ENCODE measurements at regions of chr16 and their contacts with region 1.

Region 1: GRCh38 chr16:86761111-86762031 is 183.0 kb downstream of the FOXL1 start:
- DNase-seq: peak; percentile 89
- ATAC-seq: peak; percentile 84
- H3K4me3 Mint-ChIP-seq: no peak overlapping the region
- H3K27ac Mint-ChIP-seq: no peak overlapping the region
- H3K4me1 Mint-ChIP-seq: peaks cover 59% of the 10 kb centered on the region
- H3K27me3 Mint-ChIP-seq: peaks cover 9% of the 10 kb centered on the region; the same call in 1 of the 2 replicates
- CTCF ChIP-seq: peak; percentile 80

Region 2: GRCh38 chr16:86575754-86576557 is 185.4 kb before region 1 on chr16:
- CTCF ChIA-PET with region 1: interaction called, 22 read pairs
- POLR2A ChIA-PET with region 1: no interaction called
- DNase-seq: peak; percentile 92
- ATAC-seq: peak; percentile 74
- H3K4me3 Mint-ChIP-seq: peak overlapping the region; percentile 89
- H3K27ac Mint-ChIP-seq: no peak overlapping the region
- H3K4me1 Mint-ChIP-seq: peaks cover 68% of the 10 kb centered on the region
- H3K27me3 Mint-ChIP-seq: peaks cover 98% of the 10 kb centered on the region
- CTCF ChIP-seq: no peak

Region 3: GRCh38 chr16:86718118-86718517 is 43.3 kb before region 1 on chr16:
- CTCF ChIA-PET with region 1: no interaction called
- POLR2A ChIA-PET with region 1: no interaction called
- DNase-seq: no peak
- ATAC-seq: peak; percentile 39; the same call in 1 of the 2 replicates
- H3K4me3 Mint-ChIP-seq: no peak overlapping the region
- H3K27ac Mint-ChIP-seq: no peak overlapping the region
- H3K4me1 Mint-ChIP-seq: peaks cover 38% of the 10 kb centered on the region
- H3K27me3 Mint-ChIP-seq: no peaks in the 10 kb centered on the region
- CTCF ChIP-seq: no peak

Region 4: DNA sequence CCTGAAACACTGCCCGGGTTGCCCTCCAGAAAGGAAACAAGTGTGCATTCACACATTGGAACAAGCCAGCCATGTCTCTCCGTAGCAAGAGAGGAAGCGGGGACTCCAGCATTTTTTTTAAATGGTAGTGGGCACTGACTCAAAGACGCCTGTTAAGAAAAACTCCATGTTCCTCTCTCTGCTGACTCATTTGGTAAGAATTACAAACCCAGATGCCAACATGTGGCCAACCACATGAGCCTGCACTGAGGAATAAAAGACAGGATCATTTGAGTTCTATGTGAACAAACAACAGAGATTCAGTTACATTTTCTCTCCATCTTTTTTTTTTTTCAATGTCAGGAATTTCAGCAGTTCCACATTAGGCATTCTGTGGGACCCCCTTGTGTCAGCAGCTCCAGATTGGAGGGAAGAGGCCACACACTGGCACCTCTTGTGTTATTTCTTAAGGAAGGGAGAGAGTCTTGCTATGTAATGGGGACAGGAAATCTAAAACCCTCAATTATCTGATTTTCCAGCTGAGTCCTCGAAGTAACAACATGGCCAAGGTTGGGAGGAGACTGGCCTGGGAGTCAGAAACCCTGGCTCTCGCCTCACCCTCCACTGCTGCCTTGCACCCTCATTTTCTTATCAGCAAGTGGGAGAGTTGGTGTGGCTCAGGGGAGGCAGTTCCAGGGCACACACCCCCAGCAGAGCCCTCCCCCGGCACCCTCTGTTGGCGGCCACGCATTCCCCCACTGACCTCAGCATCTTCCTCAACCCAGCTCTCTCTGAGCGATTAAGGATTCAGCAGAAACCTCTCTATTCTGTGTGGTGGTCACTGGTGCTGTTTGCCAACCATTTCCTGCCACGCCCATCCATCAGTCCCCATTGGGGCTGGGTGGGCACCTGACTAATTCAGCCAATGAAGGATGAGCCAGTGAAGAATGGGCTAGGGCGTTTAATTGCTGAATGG is 10.0 kb before region 1 on chr16:
- CTCF ChIA-PET with region 1: interaction called, 11 read pairs
- POLR2A ChIA-PET with region 1: no interaction called
- DNase-seq: no peak
- ATAC-seq: peak; percentile 36; the same call in 1 of the 2 replicates
- H3K4me3 Mint-ChIP-seq: no peak overlapping the region
- H3K27ac Mint-ChIP-seq: no peak overlapping the region
- H3K4me1 Mint-ChIP-seq: peaks cover 36% of the 10 kb centered on the region
- H3K27me3 Mint-ChIP-seq: no peaks in the 10 kb centered on the region; the same call in 1 of the 2 replicates
- CTCF ChIP-seq: no peak

Region 5: DNA sequence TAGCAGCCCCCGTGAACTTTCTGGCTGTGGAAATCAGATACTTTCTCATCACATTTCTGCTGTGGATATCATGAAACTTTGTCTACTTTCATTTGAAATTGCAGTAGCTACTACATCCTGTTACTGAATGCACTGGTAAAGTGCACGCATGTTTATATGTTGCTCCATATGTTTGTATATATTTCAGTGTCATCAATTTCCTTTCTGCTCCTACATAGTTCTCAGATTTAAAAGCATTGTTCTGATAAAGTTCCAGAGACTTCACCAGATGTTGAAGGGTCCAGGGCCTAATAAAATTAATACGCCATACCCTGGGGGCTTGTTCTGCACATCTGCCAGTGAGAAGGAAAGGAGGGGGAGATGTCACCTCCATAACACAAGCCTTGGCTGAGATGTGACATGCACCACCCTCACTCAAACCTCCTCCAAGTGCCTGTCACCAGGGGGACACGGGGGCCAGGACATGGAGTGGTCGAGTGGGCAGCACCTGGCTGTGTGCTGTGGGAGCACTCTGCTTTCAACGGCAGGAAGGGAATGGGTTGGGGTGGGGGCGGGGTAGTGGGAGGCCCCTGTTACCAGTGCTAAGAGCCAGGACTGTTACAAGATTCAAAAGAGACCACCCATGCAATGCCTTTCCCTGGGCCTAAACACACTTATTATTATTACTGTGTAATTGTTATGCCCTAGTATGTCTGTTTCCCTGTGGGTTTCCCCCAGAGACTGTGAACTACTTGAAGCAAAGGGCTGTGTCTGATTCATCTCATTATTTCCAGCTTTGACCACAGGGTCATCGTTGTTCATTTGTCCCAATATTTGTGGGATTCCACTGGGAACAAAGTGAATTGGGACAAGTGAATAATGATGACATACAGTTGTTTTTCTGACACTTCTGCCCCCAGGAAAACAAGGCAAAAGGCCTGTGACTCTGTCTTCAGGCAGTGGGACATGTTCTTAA is 10.4 kb after region 1 on chr16:
- CTCF ChIA-PET with region 1: interaction called, 12 read pairs
- POLR2A ChIA-PET with region 1: no interaction called
- DNase-seq: no peak
- ATAC-seq: no peak
- H3K4me3 Mint-ChIP-seq: no peak overlapping the region
- H3K27ac Mint-ChIP-seq: no peak overlapping the region
- H3K4me1 Mint-ChIP-seq: peaks cover 9% of the 10 kb centered on the region
- H3K27me3 Mint-ChIP-seq: peaks cover 5% of the 10 kb centered on the region; the same call in 1 of the 2 replicates
- CTCF ChIP-seq: no peak